Activated CD4-positive, alpha-beta T cell treated with anti-CD3 and anti-CD28 coated beads, Interleukin-2, amount 10 ng/mL, durations not matched to agents 7 days and 5 days (primary cell): ENCODE measurements at regions of chr12 and their contacts with region 1.

Region 1: GRCh38 chr12:14769969-14770495 is 33.2 kb downstream of the WBP11 start:
- DNase-seq: peak; percentile 88
- H3K4me3 Mint-ChIP-seq: peak overlapping the region; percentile 96
- H3K27ac Mint-ChIP-seq: peak overlapping the region; percentile 99
- H3K4me1 Mint-ChIP-seq: peaks cover 52% of the 10 kb centered on the region
- H3K27me3 Mint-ChIP-seq: no peaks in the 10 kb centered on the region

Region 2: DNA sequence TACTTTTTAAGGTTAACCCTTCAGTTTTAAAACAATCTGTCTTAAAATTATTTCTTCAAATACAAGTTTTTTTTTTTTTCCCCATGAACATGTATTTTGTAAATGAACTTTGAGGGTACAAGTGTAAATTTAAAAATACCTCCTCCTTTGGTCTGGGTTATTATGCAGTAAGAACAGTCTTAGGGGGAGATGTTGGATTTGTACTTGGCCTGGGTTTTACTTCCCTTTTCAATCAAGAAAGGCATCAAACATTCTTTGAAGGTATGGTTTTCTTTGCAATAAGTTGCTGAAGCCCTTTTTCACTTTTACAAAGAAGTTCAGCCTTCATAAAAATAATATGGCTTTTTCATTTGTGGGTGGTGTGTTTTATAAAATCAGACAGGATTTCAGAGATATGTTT is 12.7 kb after region 1 on chr12:
- CTCF ChIA-PET with region 1: interaction called, 19 read pairs
- POLR2A ChIA-PET with region 1: interaction called, 3 read pairs
- DNase-seq: no peak
- H3K4me3 Mint-ChIP-seq: no peak overlapping the region
- H3K27ac Mint-ChIP-seq: no peak overlapping the region
- H3K4me1 Mint-ChIP-seq: peaks cover 14% of the 10 kb centered on the region
- H3K27me3 Mint-ChIP-seq: no peaks in the 10 kb centered on the region

Region 3: DNA sequence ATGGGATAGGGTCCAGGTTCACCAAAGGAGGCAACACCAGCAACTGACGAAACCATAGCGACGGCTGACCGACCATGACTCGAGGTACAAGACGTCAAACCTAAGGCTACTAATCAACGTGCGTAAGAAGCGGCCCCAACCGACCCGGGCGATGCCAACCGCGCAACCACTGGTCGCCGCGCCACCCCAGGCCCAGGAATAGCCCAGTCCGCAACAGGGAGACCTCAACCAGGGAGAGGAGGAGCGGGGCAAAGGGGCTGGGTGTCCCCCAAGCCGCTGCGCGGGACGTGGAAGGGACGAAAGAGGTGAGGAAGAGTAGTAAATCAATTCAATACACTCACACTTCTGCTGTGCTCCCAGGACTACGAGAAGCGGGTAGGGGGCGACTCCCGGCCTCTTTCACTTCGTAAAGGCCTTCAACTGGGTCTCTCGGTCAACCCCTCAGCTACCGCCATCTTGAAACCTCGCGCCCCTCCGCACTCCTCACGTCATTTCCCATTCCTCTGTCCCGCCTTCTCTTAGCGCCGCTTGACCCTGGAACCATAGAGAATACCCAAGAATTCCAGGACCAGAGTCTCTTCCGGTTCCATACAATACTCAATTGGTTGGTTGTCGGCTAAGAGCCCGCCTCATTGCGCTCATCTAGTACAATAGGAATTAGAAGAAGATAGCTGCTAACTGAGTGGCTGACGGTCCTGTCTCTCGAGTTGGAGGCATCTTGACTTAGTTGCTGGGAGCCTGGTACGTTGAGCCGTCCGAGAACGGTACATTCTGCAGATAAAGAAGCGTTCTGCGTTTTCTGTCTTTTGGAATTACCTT is 33.2 kb after region 1 on chr12 and contains the starts of genes C12orf60 and WBP11:
- CTCF ChIA-PET with region 1: interaction called, 15 read pairs
- POLR2A ChIA-PET with region 1: interaction called, 18 read pairs
- DNase-seq: peak; percentile 95
- H3K4me3 Mint-ChIP-seq: no peak within 1 kb of the TSS
- H3K27ac Mint-ChIP-seq: no peak within 1 kb of the TSS
- H3K4me1 Mint-ChIP-seq: peaks cover 20% of the 10 kb centered on the region
- H3K27me3 Mint-ChIP-seq: no peaks in the 10 kb centered on the region
- total RNA-seq, gene C12orf60: 1.00 to 1.3 TPM
- total RNA-seq, gene WBP11: 83.9 to 95.7 TPM